PC-9 (cell line): ENCODE measurements at regions of chr3 and their contacts with region 1.

Region 1: DNA sequence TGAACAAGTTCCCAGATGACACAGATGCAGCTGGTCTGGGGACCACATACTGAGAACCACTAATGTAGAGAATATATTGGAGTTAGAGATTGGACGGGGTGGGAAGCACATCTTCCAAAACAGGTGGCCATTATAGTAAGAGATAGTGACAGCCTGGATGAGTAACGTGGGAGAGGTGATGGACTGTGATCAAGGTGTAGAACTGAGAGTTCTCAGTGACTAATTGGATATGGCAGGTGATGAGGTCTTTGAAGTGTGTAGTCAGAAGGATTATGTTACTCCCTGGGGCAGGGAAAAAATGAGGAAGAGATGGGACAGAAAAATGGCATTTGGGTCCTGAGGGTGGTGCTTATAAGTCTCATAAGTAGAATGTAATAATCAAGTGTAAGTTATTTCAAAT is 66.6 kb downstream of the KCNMB2 start:
- DNase-seq: no peak
- H3K4me3 ChIP-seq: no peak overlapping the region
- H3K27ac ChIP-seq: no peak overlapping the region
- H3K4me1 ChIP-seq: no peaks in the 10 kb centered on the region
- H3K27me3 ChIP-seq: no peaks in the 10 kb centered on the region
- CTCF ChIP-seq: no peak

Region 2: GRCh38 chr3:178588628-178589027 is 14.2 kb before region 1 on chr3:
- CTCF ChIA-PET with region 1: no interaction called
- POLR2A ChIA-PET with region 1: interaction called, 37 read pairs
- intact Hi-C with region 1: no loop called
- DNase-seq: no peak
- H3K4me3 ChIP-seq: no peak overlapping the region
- H3K27ac ChIP-seq: no peak overlapping the region
- H3K4me1 ChIP-seq: no peaks in the 10 kb centered on the region
- H3K27me3 ChIP-seq: no peaks in the 10 kb centered on the region
- CTCF ChIP-seq: no peak

Region 3: DNA sequence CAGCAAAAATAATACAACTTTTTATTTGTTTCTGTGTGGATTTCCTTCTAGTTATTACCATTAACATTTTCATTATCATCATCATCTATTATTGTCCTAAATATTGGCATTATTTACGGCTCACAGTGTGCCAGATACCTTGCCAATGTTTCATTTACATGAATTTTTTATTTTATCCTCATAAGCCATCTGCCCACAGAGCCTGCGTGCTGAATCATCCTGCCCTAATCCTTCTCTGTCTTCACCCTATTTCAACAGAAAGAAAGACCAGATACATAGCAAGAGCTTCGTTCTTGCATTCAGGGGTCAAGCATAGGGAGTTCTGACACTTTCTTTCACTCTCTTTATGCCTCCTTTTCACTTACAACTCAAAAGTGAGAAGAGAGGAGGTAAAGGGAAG is 15.3 kb after region 1 on chr3:
- CTCF ChIA-PET with region 1: no interaction called
- POLR2A ChIA-PET with region 1: no interaction called
- intact Hi-C with region 1: loop called (anchors 1 kb)
- DNase-seq: no peak
- H3K4me3 ChIP-seq: no peak overlapping the region
- H3K27ac ChIP-seq: no peak overlapping the region
- H3K4me1 ChIP-seq: no peaks in the 10 kb centered on the region
- H3K27me3 ChIP-seq: no peaks in the 10 kb centered on the region
- CTCF ChIP-seq: no peak